H1 (cell line): ENCODE measurements at regions of chr2 and their contacts with region 1.

Region 1: DNA sequence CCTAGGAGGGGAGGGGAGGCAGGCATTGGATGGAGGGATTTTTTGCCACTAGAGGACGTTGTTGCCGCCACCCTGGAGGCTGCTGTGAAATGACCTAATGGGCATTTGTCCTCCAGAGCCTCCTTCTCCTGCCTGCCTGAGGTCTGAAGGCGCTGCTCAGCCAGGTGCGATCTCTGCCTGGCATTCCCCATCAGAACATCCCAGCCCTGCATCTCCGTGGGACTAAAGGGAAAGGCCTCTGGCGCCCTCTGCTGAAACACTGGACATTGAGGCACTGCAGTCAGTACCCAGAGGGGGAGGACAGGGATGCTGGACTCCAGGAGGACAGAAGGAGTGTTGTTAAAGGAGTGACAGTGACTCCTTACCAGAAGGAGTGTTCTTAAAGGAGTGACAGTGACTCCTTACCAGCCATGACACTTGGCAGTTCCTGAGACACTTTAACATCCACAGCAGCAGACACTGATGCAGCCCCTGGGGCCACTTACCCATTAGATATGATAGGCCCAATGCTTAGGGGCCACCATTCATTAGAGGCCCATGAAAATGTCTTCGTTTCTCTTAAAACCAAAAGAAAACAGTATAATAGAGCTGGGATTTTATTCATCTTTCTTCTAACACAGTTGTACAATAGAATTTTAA is 17.0 kb downstream of the THNSL2 start:
- DNase-seq: peak; percentile 73 to 84
- H3K4me3 ChIP-seq: no peak overlapping the region
- H3K27ac ChIP-seq: no peak overlapping the region
- H3K4me1 ChIP-seq: peaks cover 3 to 5% (median 5%) of the 10 kb centered on the region in 4 experiments; a peak in 6 of 7 replicates
- H3K27me3 ChIP-seq: no peaks in the 10 kb centered on the region
- CTCF ChIP-seq: peak; percentile 84 to 94 (median 86)
- EP300 ChIP-seq: no peak
- POLR2A ChIP-seq: no peak
- RAD21 ChIP-seq: peak; percentile 89 to 90

Region 2: DNA sequence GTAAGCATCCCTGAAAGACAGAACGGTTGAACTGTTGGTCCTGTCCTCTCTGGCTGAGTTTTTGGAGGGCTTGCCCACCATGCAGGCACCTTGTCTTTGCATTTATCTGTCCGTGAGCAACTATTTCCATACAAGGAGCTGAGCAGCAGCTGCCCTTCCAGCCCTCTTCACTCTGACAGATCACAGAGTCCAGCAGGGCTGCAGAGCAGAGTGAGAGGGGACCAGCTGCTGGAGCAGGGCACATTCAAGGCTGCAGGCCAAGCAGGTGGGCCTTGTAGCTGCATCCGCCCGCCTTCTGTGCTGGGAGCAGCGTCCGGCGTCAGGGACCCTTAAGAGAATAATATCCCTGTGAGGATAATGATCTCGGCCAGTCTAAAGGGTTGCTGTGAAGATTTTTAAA is 110.1 kb before region 1 on chr2:
- CTCF ChIA-PET with region 1: no interaction called
- POLR2A ChIA-PET with region 1: no interaction called
- DNase-seq: no peak
- H3K4me3 ChIP-seq: no peak overlapping the region
- H3K27ac ChIP-seq: no peak overlapping the region
- H3K4me1 ChIP-seq: peaks cover 0 to 2% (median under 1%) of the 10 kb centered on the region in 4 experiments; a peak in 1 of 7 replicates
- H3K27me3 ChIP-seq: no peaks in the 10 kb centered on the region
- CTCF ChIP-seq: no peak
- EP300 ChIP-seq: no peak
- POLR2A ChIP-seq: no peak
- RAD21 ChIP-seq: no peak

Region 3: DNA sequence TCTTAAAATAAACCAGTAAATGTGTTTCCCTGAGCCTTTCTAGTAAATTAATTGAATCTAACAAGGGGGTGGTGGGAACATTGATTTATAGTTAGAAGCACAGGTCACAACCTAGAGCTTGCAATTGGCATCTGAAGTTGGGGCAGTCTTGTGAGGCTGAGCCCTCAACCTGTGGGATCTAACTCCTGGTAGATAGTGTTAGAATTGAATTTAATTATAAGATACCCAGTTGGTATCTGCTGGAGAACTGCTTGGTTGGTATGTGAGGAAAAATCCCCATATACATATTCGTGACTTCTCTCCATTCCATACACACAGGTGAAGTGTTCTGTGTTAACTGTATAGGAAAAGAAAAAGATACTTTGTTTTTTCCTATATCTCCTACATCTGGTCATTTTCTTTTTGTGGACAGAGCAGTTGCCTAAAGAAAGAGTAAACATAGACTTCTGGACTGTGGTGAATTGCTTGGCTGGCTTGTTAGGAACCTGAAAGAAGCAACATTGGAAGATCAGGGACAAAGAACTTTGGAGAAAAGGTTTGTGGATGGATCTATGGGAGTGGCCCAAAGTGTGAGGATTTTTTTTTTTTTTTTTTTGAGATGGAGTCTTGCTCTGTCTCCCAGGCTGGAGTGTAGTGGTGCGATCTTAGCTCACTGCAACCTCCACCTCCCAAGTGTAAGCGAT is 19.6 kb after region 1 on chr2:
- CTCF ChIA-PET with region 1: interaction called, 39 read pairs
- POLR2A ChIA-PET with region 1: interaction called, 6 read pairs
- DNase-seq: no peak
- H3K4me3 ChIP-seq: no peak overlapping the region
- H3K27ac ChIP-seq: no peak overlapping the region
- H3K4me1 ChIP-seq: peaks cover 0 to 7% (median under 1%) of the 10 kb centered on the region in 4 experiments; a peak in 2 of 7 replicates
- H3K27me3 ChIP-seq: peaks cover 0 to 4% (median 3%) of the 10 kb centered on the region in 4 experiments; a peak in 4 of 7 replicates
- CTCF ChIP-seq: no peak
- EP300 ChIP-seq: no peak
- POLR2A ChIP-seq: no peak
- RAD21 ChIP-seq: no peak

Region 4: GRCh38 chr2:88254437-88255091 is 67.4 kb after region 1 on chr2:
- CTCF ChIA-PET with region 1: interaction called, 13 read pairs
- POLR2A ChIA-PET with region 1: no interaction called
- DNase-seq: no peak
- H3K4me3 ChIP-seq: no peak overlapping the region
- H3K27ac ChIP-seq: no peak overlapping the region
- H3K4me1 ChIP-seq: no peaks in the 10 kb centered on the region; a peak in 1 of 7 replicates
- H3K27me3 ChIP-seq: no peaks in the 10 kb centered on the region
- CTCF ChIP-seq: no peak
- EP300 ChIP-seq: no peak
- POLR2A ChIP-seq: no peak
- RAD21 ChIP-seq: no peak

Region 5: GRCh38 chr2:88307817-88308216 is 120.7 kb after region 1 on chr2:
- CTCF ChIA-PET with region 1: interaction called, 23 read pairs
- POLR2A ChIA-PET with region 1: no interaction called
- DNase-seq: peak in 1 of 2 experiments; percentile 13
- H3K4me3 ChIP-seq: no peak overlapping the region
- H3K27ac ChIP-seq: no peak overlapping the region
- H3K4me1 ChIP-seq: no peaks in the 10 kb centered on the region
- H3K27me3 ChIP-seq: no peaks in the 10 kb centered on the region
- CTCF ChIP-seq: peak; percentile 40 to 76 (median 76)
- EP300 ChIP-seq: no peak
- POLR2A ChIP-seq: no peak
- RAD21 ChIP-seq: peak; percentile 67 to 78

Region 6: DNA sequence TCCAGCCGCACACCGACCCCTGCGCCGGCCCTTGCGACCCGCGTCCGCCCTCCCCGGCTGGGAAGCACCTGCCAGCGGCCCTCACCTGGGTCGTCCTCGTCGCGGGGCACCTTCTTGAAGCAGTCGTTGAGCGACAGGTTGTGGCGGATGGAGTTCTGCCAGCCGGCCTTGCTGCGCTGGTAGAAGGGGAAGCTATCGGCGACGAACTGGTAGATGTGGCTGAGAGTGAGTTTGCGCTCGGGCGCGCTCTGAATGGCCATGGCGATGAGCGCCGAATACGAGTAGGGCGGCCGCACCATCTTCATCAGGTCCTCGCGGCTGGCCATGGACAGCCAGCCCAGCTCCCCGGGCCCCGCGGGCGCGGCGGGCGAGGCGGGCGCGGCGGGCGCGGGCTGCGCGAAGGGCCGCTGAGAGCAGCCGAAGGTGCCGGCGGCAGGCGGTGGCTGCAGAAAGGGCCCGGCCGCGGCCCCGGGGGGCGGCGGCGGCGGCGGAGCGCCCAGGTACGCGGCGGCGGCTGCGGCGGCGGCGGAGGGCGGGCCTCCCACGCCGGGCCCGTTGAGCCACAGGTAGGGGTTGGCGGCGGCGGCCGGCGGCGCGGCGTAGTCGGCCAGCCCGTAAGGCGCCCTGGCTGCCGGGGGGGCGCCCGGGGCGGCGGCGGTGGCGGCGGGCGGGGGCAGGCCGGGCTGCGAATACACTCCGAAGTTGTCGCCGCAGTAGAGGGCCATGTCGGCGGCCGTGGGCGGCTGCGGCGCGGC is 264.8 kb after region 1 on chr2:
- CTCF ChIA-PET with region 1: interaction called, 81 read pairs
- POLR2A ChIA-PET with region 1: no interaction called
- DNase-seq: peak in 1 of 2 experiments; percentile 76
- H3K4me3 ChIP-seq: peak overlapping the region; percentile 65 to 96 (median 77)
- H3K27ac ChIP-seq: no peak overlapping the region
- H3K4me1 ChIP-seq: peaks cover 0 to 4% (median 2%) of the 10 kb centered on the region in 4 experiments; a peak in 4 of 7 replicates
- H3K27me3 ChIP-seq: peaks cover 0 to 21% (median 9%) of the 10 kb centered on the region in 4 experiments; a peak in 6 of 7 replicates
- CTCF ChIP-seq: no peak
- EP300 ChIP-seq: no peak
- POLR2A ChIP-seq: no peak
- RAD21 ChIP-seq: no peak

Region 7: DNA sequence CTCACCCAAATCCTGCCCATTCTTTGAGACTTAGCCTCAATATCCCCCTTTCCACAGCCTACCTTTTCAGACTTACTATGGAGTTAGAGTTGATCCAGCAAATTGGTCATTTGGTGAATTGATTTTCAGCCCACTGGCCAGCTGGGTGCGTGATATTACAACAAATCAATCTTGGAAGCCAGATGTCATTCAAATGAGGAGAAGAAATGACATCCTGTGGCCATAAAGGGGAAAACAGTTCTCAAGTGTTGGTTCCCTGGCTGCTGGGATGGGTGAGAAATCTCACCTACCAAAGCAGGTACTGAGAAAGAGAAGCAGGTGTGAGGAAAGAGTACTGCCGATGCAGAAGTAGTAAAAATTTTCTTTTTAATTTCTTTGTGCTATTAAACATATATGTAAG is 302.0 kb after region 1 on chr2:
- CTCF ChIA-PET with region 1: interaction called, 11 read pairs
- POLR2A ChIA-PET with region 1: no interaction called
- DNase-seq: no peak
- H3K4me3 ChIP-seq: no peak overlapping the region
- H3K27ac ChIP-seq: no peak overlapping the region
- H3K4me1 ChIP-seq: peaks cover 0 to 8% (median 0%) of the 10 kb centered on the region in 4 experiments; a peak in 2 of 7 replicates
- H3K27me3 ChIP-seq: no peaks in the 10 kb centered on the region
- CTCF ChIP-seq: peak in 1 of 3 experiments; percentile 51; a peak in 2 of 4 replicates
- EP300 ChIP-seq: no peak
- POLR2A ChIP-seq: no peak
- RAD21 ChIP-seq: peak; percentile 54 to 58

Region 8: DNA sequence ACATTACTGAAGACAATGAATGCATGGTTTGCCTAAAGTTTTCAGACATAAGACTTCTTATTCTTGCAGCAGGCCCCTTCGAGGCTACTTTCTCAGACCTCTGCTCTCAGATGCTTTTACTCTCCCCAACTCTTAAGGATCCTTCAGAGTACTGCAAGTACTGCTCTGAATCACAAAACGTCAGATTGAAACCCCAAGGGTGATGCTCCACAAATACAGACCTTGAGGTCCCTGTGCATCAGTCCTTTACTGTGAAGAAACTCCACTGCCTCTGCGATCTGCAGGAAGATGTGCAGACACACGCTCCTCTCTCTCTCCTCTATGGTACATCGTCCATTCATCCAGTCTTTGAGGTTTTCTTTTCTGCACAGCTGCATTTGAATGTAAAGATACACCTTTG is 387.3 kb after region 1 on chr2:
- CTCF ChIA-PET with region 1: no interaction called
- POLR2A ChIA-PET with region 1: no interaction called
- DNase-seq: no peak
- H3K4me3 ChIP-seq: no peak overlapping the region
- H3K27ac ChIP-seq: no peak overlapping the region
- H3K4me1 ChIP-seq: no peaks in the 10 kb centered on the region
- H3K27me3 ChIP-seq: no peaks in the 10 kb centered on the region
- CTCF ChIP-seq: no peak
- EP300 ChIP-seq: no peak
- POLR2A ChIP-seq: no peak
- RAD21 ChIP-seq: no peak

Region 9: DNA sequence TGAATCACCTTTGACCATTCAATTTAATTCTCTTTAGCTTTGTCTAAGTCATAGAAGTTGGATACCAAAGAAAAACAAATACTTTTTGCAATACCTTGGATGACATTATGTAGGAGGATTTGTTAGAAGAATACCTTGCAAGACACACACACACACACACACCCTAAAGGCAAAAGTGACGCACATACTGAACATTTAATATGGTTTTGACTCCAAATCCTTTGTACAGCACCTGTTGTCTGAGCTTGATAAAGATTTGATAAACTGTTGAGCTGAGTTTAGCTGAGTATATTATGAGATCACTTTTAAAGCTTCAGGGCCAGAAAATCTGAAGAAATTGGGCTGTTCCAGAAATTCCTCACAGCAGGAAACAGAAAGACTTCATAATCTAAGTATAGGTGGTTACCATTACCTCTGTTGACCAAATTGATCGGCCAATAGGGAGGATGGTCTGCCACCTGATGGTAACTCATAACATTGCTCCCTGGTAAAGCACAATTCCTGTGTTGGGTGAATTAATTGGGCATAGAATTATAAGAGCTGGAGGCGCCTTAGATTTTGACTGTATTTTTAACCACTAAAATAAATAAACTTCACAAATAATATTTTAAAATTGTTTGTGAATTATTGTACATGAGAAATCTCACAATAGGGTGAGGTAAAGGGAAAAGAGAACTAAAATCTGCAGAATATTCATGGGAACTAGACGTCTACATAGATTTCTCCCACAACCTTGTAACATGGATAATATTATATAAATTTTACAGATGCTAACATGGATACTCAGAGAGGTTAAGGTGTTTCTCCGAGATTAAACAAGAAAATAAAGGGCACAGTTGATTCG is 482.4 kb after region 1 on chr2:
- CTCF ChIA-PET with region 1: interaction called, 16 read pairs
- POLR2A ChIA-PET with region 1: no interaction called
- DNase-seq: no peak
- H3K4me3 ChIP-seq: no peak overlapping the region
- H3K27ac ChIP-seq: no peak overlapping the region
- H3K4me1 ChIP-seq: no peaks in the 10 kb centered on the region; a peak in 1 of 7 replicates
- H3K27me3 ChIP-seq: no peaks in the 10 kb centered on the region
- CTCF ChIP-seq: peak in 2 of 3 experiments; percentile 76 to 78; a peak in 3 of 4 replicates
- EP300 ChIP-seq: no peak
- POLR2A ChIP-seq: no peak
- RAD21 ChIP-seq: peak; percentile 86 to 92